ENCODE measurements at regions of chr5 and their contacts with region 1.

Region 1: GRCh38 chr5:141968914-141969608 is at the start of gene RNF14:
- DNase-seq: peak; percentile 97
- ATAC-seq: peak; percentile 95
- H3K4me3 Mint-ChIP-seq: peak within 1 kb of the TSS; percentile 97
- H3K27ac Mint-ChIP-seq: peak within 1 kb of the TSS; percentile 97
- H3K4me1 Mint-ChIP-seq: peaks cover 25% of the 10 kb centered on the region
- H3K27me3 Mint-ChIP-seq: no peaks in the 10 kb centered on the region
- total RNA-seq, gene RNF14: 29.0 to 33.9 TPM

Region 2: DNA sequence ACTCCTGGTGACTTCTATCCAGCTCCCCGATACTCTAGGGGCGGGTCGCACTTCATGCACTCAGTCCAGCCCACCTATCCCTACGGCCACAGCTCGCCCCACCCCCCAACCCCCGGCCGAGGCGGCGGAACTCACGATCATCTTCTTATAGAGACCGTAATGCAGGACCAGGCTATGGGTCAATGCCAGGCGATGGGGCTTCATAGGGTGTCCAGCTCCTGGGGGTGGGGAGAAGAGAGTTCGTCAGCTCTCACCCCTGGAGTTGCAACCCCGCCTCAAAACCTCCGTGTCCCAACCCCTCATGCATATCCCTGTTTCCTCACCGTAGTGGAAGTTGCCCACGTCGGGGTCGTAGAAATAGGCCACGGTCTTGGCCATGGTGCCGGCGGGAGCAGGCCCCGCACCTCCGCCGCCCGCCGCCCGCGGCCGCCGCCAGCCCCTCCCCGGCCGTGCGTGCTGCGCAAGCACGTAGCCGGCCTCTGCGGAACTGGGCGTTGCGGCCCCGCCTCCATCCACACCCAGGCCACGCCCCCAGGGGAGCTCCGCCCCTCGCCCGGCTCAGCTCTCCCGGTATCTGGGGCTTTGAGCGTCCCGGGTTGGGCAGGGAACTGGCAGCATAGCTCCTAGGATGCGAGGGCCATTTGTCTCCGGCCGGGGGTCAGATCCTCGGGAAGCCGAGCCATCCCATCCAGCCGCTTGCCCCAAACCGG is 332.5 kb before region 1 on chr5 and contains the starts of genes HDAC3 and RELL2:
- POLR2A ChIA-PET with region 1: interaction called, 16 read pairs
- DNase-seq: peak; percentile 99
- ATAC-seq: peak; percentile 69
- H3K4me3 Mint-ChIP-seq: peak within 1 kb of the TSS; percentile 94
- H3K27ac Mint-ChIP-seq: peak within 1 kb of the TSS; percentile 93
- H3K4me1 Mint-ChIP-seq: peaks cover 45% of the 10 kb centered on the region
- H3K27me3 Mint-ChIP-seq: no peaks in the 10 kb centered on the region
- total RNA-seq, gene HDAC3: 85.8 to 89.6 TPM
- total RNA-seq, gene RELL2: 31.4 to 31.6 TPM

Region 3: DNA sequence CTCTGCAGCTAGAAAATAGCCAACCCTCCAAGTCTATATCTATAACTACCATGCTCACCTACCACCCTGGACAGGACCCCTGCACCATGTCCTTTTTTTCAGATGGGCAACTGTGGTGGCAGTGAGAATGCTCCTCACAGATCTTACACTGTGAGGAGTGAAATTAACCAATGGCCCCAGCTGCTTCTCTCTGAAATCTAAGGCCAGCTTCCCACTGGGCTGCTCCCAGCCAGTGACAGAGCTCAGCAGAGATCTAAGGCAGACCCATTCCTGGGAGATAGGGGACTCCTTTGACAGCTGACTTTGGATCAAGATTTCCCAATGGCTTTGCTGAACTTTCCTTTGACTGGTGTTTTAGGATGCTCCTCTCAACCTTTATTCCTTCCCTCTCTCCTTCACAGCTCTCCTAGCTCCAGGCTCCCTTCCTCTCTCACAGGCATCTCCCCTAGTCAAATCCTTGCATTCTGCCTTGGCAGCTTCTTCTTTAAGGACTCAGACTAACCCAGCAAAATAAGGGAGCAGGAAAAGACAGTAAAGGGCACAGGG is 285.4 kb before region 1 on chr5:
- POLR2A ChIA-PET with region 1: interaction called, 10 read pairs
- DNase-seq: no peak
- ATAC-seq: no peak
- H3K4me3 Mint-ChIP-seq: peak overlapping the region; percentile 13
- H3K27ac Mint-ChIP-seq: peak overlapping the region; percentile 40
- H3K4me1 Mint-ChIP-seq: peaks cover 34% of the 10 kb centered on the region
- H3K27me3 Mint-ChIP-seq: no peaks in the 10 kb centered on the region

Region 4: GRCh38 chr5:141849375-141850243 is 119.5 kb before region 1 on chr5:
- POLR2A ChIA-PET with region 1: interaction called, 14 read pairs
- DNase-seq: peak; percentile 81
- ATAC-seq: peak; percentile 78
- H3K4me3 Mint-ChIP-seq: peak overlapping the region; percentile 90
- H3K27ac Mint-ChIP-seq: peak overlapping the region; percentile 91
- H3K4me1 Mint-ChIP-seq: peaks cover 15% of the 10 kb centered on the region
- H3K27me3 Mint-ChIP-seq: peaks cover 2% of the 10 kb centered on the region

Region 5: GRCh38 chr5:141923448-141924352 is 45.4 kb before region 1 on chr5 and contains the start of gene DELE1:
- POLR2A ChIA-PET with region 1: interaction called, 21 read pairs
- DNase-seq: peak; percentile 91
- ATAC-seq: peak; percentile 98
- H3K4me3 Mint-ChIP-seq: peak within 1 kb of the TSS; percentile 94
- H3K27ac Mint-ChIP-seq: peak within 1 kb of the TSS; percentile 92
- H3K4me1 Mint-ChIP-seq: peaks cover 12% of the 10 kb centered on the region
- H3K27me3 Mint-ChIP-seq: no peaks in the 10 kb centered on the region
- total RNA-seq, gene DELE1: 71.2 to 73.1 TPM

Region 6: GRCh38 chr5:141934099-141934844 is 34.8 kb before region 1 on chr5:
- POLR2A ChIA-PET with region 1: no interaction called
- DNase-seq: no peak
- ATAC-seq: no peak
- H3K4me3 Mint-ChIP-seq: no peak overlapping the region
- H3K27ac Mint-ChIP-seq: no peak overlapping the region
- H3K4me1 Mint-ChIP-seq: peaks cover 2% of the 10 kb centered on the region
- H3K27me3 Mint-ChIP-seq: no peaks in the 10 kb centered on the region

Region 7: GRCh38 chr5:142012792-142013388 is 43.8 kb after region 1 on chr5 and contains the start of gene GNPDA1:
- POLR2A ChIA-PET with region 1: interaction called, 26 read pairs
- DNase-seq: peak; percentile 83
- ATAC-seq: peak; percentile 47
- H3K4me3 Mint-ChIP-seq: peak within 1 kb of the TSS; percentile 89
- H3K27ac Mint-ChIP-seq: peak within 1 kb of the TSS; percentile 94
- H3K4me1 Mint-ChIP-seq: peaks cover 73% of the 10 kb centered on the region
- H3K27me3 Mint-ChIP-seq: no peaks in the 10 kb centered on the region
- total RNA-seq, gene GNPDA1: 38.2 to 40.5 TPM

Measured in activated naive CD8-positive, alpha-beta T cell treated with anti-CD3 and anti-CD28 coated beads, Interleukin-2, amount 10 ng/mL, durations not matched to agents 7 days and 5 days (primary cell).